Posterior cingulate gyrus (tissue), 11 donors: ENCODE measurements at regions of chr10 and their contacts with region 1.

Region 1: DNA sequence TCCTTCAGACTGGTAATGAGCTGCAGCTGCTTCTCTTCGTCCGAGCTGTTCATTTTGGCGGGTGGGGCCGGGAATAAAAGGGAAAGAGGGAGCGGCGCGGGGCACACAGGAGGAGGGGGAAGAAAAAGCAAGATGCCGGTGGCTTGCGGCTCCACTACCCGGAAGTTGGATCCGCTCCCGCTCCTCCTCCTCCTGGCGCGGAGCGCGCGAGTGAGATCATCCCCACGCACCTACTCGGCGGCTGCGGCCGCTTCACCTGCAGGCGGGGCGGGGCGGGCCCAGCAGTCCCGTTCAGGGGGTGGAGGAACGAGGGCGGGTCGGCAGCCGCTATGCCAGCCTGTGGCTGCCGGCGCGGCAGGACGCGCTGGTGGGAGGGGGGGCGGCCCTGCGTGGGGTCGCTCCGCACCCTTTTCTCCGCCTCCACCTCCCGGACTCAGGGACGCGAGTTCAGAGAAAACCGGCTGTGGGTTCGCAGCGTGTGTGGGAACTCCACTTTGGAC is at the start of gene SHTN1:
- DNase-seq: peak; percentile 64 to 96 (median 79)

Region 2: DNA sequence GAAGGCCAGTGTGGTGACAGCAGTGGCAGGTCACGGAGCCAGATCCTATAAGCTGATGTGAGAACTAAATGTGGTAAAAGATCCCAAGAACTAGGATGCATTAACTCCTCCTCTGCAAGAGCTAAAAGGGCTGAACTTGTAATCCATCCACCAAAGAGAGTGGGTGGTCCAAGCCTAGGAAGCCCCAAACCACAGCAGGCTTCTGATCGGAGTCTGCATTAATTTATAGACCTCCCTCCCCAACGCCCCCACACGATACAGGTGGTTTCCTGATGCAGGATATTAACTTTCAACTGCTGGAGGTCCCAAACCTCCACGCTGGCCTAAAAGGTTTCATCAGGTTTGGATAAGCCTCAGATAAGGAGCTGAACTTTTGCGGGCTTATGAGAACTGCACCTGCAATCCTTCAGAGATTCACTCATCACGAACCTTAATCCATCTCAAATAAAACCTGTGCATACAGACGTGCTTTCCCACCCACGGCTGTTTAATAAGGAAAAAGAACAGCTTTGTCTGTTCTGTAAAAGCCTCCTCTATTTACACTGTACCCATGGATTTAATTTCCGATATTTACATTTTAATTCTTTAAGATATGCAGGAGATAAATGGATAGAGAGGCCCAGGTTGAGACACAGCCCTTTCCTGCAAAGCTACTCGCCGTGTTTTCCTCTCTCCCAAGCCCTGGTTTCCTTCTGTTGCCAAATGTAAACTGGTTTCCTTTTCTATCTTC is 807.0 kb before region 1 on chr10:
- intact Hi-C with region 1: no loop called
- DNase-seq: no peak

Region 3: DNA sequence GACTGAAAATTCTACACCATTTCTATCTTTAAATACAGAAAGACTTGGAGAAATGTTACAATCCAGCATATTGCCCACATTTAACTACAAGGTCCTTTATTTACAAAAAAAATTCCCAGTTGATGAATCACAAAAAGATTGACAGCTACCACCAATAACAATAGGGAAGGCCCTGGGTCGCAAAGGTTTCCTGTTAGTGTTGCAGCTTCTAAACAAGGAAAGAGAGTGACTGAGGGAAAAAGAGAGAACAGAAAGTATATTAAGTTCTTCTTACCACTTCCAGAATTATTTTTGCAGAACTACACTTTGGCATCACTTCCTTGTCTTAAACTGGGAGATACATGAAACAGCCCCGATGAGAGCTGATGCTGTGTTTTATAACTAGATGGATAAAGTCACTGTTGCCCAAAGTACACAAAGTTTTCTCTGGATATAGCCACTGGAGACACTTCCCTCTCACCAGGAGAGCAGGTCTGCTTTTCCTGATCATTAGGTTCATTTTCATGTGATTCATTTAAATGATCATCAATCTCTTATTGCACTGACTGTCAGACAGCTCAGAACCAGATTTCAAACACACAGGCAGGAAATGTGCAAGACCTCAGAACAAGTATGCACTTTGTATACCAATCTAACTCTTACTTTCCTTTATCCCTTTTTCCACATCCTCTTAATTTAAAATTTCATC is 57.1 kb before region 1 on chr10:
- intact Hi-C with region 1: loop called (anchors 10 kb)
- DNase-seq: no peak

Region 4: GRCh38 chr10:116968331-116968730 is 36.7 kb before region 1 on chr10:
- intact Hi-C with region 1: loop called (anchors 2 kb)
- DNase-seq: no peak

Region 5: GRCh38 chr10:117768333-117769042 is 763.4 kb after region 1 on chr10:
- intact Hi-C with region 1: no loop called
- DNase-seq: no peak